ENCODE measurements at regions of chr1 and their contacts with region 1.

Region 1: GRCh38 chr1:208245185-208245705 is 1.1 kb upstream of the PLXNA2 start:
- DNase-seq: peak; percentile 61 to 87 (median 77)
- ATAC-seq: peak; percentile 56
- H3K4me3 ChIP-seq: peak overlapping the region; percentile 71 to 78
- H3K4me3 Mint-ChIP-seq: peak overlapping the region; percentile 80
- H3K27ac ChIP-seq: peak overlapping the region; percentile 35 to 71
- H3K27ac Mint-ChIP-seq: peak overlapping the region; percentile 9
- H3K4me1 ChIP-seq: peaks cover 4% of the 10 kb centered on the region
- H3K4me1 Mint-ChIP-seq: peaks cover 6% of the 10 kb centered on the region
- H3K27me3 ChIP-seq: peaks cover 0 to 6% of the 10 kb centered on the region in 2 experiments
- H3K27me3 Mint-ChIP-seq: peaks cover 18% of the 10 kb centered on the region
- CTCF ChIP-seq: peak; percentile 76

Region 2: DNA sequence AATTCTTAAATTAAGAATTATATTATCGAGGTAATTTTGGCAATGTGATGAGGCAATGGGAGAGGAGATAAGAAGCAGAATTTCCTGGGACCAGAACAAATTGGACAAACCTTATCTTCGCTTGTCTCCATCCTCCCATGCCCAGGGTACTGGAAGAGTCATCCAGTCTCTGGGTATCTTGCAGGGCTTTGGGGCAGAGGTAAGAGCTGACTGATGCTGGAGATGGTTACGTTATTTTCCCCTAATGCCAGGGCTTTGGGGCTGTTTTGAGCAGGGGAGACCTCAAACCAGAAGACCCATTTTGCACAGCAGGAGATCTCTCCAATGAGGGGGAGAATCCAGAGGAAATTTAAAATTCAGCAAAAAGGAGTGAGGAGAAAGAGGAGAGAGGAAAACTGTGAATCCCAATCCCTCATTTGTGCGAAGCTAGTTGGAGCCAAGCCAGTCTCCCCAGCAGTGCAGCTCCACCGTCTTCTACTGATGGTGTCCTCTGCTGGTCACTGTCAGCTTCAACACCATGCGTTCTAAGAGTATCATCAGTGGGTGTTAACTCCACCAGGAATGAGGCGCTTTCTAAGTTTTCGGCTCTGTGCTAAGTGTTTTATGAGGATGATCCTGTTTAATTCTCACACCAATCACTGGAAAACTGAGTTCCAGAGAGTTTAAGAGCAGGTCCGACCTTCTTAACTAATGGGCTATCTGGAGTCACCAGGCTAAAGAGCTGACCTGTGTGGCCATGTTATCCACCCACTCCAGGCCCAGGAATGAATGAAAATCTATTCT is 247.6 kb before region 1 on chr1:
- CTCF ChIA-PET with region 1: interaction called, 13 read pairs
- POLR2A ChIA-PET with region 1: no interaction called
- intact Hi-C with region 1: no loop called
- DNase-seq: peak in 8 of 9 experiments; percentile 10 to 65 (median 48)
- ATAC-seq: peak; percentile 73
- H3K4me3 ChIP-seq: no peak overlapping the region
- H3K4me3 Mint-ChIP-seq: no peak overlapping the region
- H3K27ac ChIP-seq: no peak overlapping the region
- H3K27ac Mint-ChIP-seq: no peak overlapping the region
- H3K4me1 ChIP-seq: no peaks in the 10 kb centered on the region
- H3K4me1 Mint-ChIP-seq: no peaks in the 10 kb centered on the region
- H3K27me3 ChIP-seq: no peaks in the 10 kb centered on the region
- H3K27me3 Mint-ChIP-seq: peaks cover 4% of the 10 kb centered on the region
- CTCF ChIP-seq: peak; percentile 59

Region 3: GRCh38 chr1:208093754-208094719 is 151.2 kb before region 1 on chr1:
- CTCF ChIA-PET with region 1: interaction called, 8 read pairs
- POLR2A ChIA-PET with region 1: no interaction called
- intact Hi-C with region 1: loop called in 1 of 2 experiments (anchors 2 kb)
- DNase-seq: peak; percentile 21 to 68 (median 58)
- ATAC-seq: peak; percentile 23
- H3K4me3 ChIP-seq: no peak overlapping the region
- H3K4me3 Mint-ChIP-seq: no peak overlapping the region
- H3K27ac ChIP-seq: no peak overlapping the region
- H3K27ac Mint-ChIP-seq: no peak overlapping the region
- H3K4me1 ChIP-seq: no peaks in the 10 kb centered on the region
- H3K4me1 Mint-ChIP-seq: no peaks in the 10 kb centered on the region
- H3K27me3 ChIP-seq: no peaks in the 10 kb centered on the region
- H3K27me3 Mint-ChIP-seq: no peaks in the 10 kb centered on the region
- CTCF ChIP-seq: peak; percentile 64

Region 4: GRCh38 chr1:208132287-208132883 is 112.9 kb before region 1 on chr1:
- CTCF ChIA-PET with region 1: interaction called, 18 read pairs
- POLR2A ChIA-PET with region 1: interaction called, 3 read pairs
- intact Hi-C with region 1: loop called (anchors 1 kb)
- DNase-seq: peak in 8 of 9 experiments; percentile 9 to 67 (median 45)
- ATAC-seq: peak; percentile 36
- H3K4me3 ChIP-seq: no peak overlapping the region
- H3K4me3 Mint-ChIP-seq: peak overlapping the region; percentile 13
- H3K27ac ChIP-seq: no peak overlapping the region
- H3K27ac Mint-ChIP-seq: no peak overlapping the region
- H3K4me1 ChIP-seq: peaks cover 7% of the 10 kb centered on the region
- H3K4me1 Mint-ChIP-seq: peaks cover 7% of the 10 kb centered on the region
- H3K27me3 ChIP-seq: peaks cover 0 to 2% of the 10 kb centered on the region in 2 experiments
- H3K27me3 Mint-ChIP-seq: peaks cover 25% of the 10 kb centered on the region
- CTCF ChIP-seq: peak; percentile 62